ENCODE measurements at regions of chr5 and their contacts with region 1.

Region 1: GRCh38 chr5:141557681-141558136 is 61.1 kb downstream of the DIAPH1 start:
- DNase-seq: peak; percentile 98
- H3K4me3 ChIP-seq: peak overlapping the region; percentile 32
- CTCF ChIP-seq: peak; percentile 72

Region 2: GRCh38 chr5:140418862-140419520 is 1138.7 kb before region 1 on chr5:
- CTCF ChIA-PET with region 1: no interaction called
- POLR2A ChIA-PET with region 1: no interaction called
- DNase-seq: no peak
- H3K4me3 ChIP-seq: no peak overlapping the region
- CTCF ChIP-seq: no peak

Region 3: GRCh38 chr5:141338538-141339306 is 219.0 kb before region 1 on chr5 and contains the start of gene PCDHGA2:
- CTCF ChIA-PET with region 1: interaction called, 209 read pairs
- POLR2A ChIA-PET with region 1: no interaction called
- DNase-seq: no peak
- H3K4me3 ChIP-seq: peak within 1 kb of the TSS; percentile 51
- CTCF ChIP-seq: peak; percentile 53

Region 4: GRCh38 chr5:141387233-141387949 is 170.3 kb before region 1 on chr5 and contains the start of gene PCDHGB4:
- CTCF ChIA-PET with region 1: interaction called, 77 read pairs
- POLR2A ChIA-PET with region 1: no interaction called
- DNase-seq: no peak
- H3K4me3 ChIP-seq: peak within 1 kb of the TSS; percentile 42
- CTCF ChIP-seq: peak; percentile 33

Region 5: DNA sequence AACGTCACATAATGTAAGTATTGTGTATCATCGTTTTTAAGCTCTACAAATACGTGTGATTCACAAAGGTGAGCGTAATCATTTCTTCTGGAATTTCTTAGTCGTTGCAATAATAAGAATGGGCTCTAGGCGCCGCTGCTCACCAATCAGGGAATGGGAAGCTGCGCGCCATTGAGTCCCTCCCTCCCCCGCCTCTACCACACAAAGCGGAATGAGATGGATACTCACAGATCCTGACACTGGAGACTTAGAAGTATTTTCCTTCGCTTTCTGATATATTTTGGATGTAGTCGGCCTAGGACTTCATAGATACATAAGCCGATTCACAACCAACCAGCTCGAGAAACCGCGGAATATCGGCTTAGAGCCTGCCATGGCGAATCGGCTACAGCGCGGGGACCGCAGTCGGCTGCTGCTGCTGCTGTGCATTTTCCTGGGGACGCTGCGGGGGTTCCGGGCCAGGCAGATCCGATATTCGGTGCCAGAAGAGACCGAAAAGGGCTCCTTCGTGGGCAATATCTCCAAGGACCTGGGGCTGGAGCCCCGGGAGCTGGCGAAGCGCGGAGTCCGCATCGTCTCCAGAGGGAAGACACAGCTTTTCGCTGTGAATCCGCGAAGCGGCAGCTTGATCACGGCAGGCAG is 136.7 kb before region 1 on chr5 and contains the start of gene PCDHGA11:
- CTCF ChIA-PET with region 1: interaction called, 303 read pairs
- POLR2A ChIA-PET with region 1: interaction called, 10 read pairs
- DNase-seq: no peak
- H3K4me3 ChIP-seq: peak within 1 kb of the TSS; percentile 57
- CTCF ChIP-seq: peak; percentile 41

Region 6: GRCh38 chr5:141484641-141485311 is 72.9 kb before region 1 on chr5 and contains the start of gene PCDHGC4:
- CTCF ChIA-PET with region 1: interaction called, 18 read pairs
- POLR2A ChIA-PET with region 1: interaction called, 3 read pairs
- DNase-seq: no peak
- H3K4me3 ChIP-seq: peak within 1 kb of the TSS; percentile 36
- CTCF ChIP-seq: no peak

Region 7: DNA sequence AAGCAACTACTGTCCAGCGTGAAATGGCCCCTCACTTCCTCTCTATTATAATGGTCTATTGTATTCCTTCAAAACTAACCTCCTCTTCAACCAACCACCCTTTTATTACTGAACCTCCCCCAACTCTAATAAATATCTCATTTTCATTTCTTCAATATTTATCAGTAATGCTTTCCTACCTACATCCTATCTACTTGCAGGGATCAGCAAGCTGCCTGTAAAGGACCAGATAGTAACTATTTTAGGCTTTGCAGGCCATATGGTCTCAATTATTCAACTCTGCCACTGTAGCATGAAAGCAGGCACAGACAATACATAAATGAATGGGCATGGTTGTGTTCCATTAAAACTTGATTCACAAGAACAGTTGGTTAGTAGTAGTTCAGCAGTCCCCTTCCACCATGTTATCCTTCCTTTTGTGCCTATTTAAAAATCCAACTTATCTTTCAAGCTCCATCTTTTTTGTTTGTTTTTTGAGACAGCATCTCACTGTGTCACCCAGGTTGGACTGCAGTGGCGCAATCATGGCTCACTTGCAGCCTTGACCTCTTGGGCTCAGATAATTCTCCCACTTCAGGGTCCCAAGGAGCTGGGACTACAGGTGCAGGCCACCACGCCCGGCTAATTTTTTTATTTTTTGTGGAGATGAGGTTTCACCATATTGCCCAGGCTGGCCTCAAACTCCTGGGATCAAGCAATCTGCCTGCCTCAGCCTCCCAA is 23.1 kb before region 1 on chr5:
- CTCF ChIA-PET with region 1: interaction called, 45 read pairs
- POLR2A ChIA-PET with region 1: no interaction called
- DNase-seq: no peak
- H3K4me3 ChIP-seq: no peak overlapping the region
- CTCF ChIP-seq: no peak

Region 8: GRCh38 chr5:141681695-141682641 is 124.3 kb after region 1 on chr5 and contains the start of gene ARAP3:
- CTCF ChIA-PET with region 1: no interaction called
- POLR2A ChIA-PET with region 1: no interaction called
- DNase-seq: peak; percentile 37
- H3K4me3 ChIP-seq: peak within 1 kb of the TSS; percentile 58
- CTCF ChIP-seq: no peak

Region 9: DNA sequence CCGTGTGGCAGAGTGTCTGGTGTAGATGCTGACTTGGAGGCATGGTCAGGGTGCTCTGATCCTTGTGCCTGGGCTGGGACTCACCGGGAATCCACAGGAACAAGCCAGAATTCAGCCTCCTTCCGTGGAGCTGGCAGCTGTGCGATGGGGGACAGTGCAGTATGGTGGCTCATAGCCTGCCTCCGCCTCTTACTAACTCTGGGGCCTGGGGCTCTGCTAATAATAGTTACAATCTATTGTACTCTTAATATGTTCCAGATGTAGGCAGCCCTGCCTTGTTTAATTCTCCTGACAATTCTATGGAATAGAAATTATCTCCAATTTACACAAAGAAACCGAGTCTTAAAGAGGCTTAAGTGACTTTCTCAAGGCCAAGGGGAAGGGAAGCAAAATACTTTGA is 242.9 kb after region 1 on chr5:
- CTCF ChIA-PET with region 1: no interaction called
- POLR2A ChIA-PET with region 1: no interaction called
- DNase-seq: no peak
- H3K4me3 ChIP-seq: no peak overlapping the region
- CTCF ChIP-seq: no peak